ENCODE measurements at regions of chr15 and their contacts with region 1.

Region 1: GRCh38 chr15:59528965-59529402 is 82.6 kb upstream of the GCNT3 start:
- DNase-seq: peak; percentile 33
- H3K4me3 ChIP-seq: no peak overlapping the region
- CTCF ChIP-seq: peak; percentile 78

Region 2: GRCh38 chr15:58212909-58213526 is 1316.0 kb before region 1 on chr15:
- CTCF ChIA-PET with region 1: interaction called, 12 read pairs
- POLR2A ChIA-PET with region 1: no interaction called
- DNase-seq: no peak
- H3K4me3 ChIP-seq: no peak overlapping the region
- CTCF ChIP-seq: peak; percentile 52

Region 3: GRCh38 chr15:58957101-58957973 is 571.6 kb before region 1 on chr15:
- CTCF ChIA-PET with region 1: interaction called, 25 read pairs
- POLR2A ChIA-PET with region 1: no interaction called
- DNase-seq: no peak
- H3K4me3 ChIP-seq: no peak overlapping the region
- CTCF ChIP-seq: peak; percentile 74

Region 4: DNA sequence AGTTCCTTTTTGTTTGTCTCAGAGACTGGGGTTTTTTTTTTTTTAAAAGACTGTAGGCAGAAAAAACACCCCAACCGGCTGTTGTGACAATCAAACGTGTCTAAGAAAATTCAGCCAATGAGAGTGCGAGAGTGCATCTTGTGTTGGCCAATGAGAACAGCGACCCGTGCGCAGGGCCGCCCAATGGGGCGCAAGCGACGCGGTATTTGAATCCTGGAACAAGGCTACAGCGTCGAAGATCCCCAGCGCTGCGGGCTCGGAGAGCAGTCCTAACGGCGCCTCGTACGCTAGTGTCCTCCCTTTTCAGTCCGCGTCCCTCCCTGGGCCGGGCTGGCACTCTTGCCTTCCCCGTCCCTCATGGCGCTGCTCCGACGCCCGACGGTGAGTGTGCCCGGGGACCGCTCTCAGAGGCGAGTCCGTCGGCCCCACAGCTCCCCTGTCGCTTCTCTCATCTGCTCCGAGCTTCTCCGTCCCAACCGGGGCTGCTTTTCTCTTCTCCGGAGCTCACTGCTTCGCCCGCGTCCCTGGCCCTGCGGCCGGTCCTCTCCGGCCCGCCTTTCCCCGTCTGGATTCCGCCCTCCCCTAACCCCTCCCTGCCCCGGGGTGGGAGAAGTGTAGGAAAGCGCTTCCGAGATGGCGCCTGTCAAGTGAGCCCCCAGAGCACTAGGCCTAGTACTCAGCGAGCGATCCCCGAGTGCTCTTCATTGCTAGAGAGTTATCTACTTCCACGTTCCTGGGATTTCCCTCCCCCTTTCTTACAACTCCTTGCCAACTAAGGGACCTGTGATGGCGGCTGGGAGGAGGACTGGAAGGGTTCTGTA is 423.9 kb before region 1 on chr15 and contains the start of gene CCNB2:
- CTCF ChIA-PET with region 1: interaction called, 12 read pairs
- POLR2A ChIA-PET with region 1: no interaction called
- DNase-seq: peak; percentile 52
- H3K4me3 ChIP-seq: peak within 1 kb of the TSS; percentile 98
- CTCF ChIP-seq: no peak

Region 5: DNA sequence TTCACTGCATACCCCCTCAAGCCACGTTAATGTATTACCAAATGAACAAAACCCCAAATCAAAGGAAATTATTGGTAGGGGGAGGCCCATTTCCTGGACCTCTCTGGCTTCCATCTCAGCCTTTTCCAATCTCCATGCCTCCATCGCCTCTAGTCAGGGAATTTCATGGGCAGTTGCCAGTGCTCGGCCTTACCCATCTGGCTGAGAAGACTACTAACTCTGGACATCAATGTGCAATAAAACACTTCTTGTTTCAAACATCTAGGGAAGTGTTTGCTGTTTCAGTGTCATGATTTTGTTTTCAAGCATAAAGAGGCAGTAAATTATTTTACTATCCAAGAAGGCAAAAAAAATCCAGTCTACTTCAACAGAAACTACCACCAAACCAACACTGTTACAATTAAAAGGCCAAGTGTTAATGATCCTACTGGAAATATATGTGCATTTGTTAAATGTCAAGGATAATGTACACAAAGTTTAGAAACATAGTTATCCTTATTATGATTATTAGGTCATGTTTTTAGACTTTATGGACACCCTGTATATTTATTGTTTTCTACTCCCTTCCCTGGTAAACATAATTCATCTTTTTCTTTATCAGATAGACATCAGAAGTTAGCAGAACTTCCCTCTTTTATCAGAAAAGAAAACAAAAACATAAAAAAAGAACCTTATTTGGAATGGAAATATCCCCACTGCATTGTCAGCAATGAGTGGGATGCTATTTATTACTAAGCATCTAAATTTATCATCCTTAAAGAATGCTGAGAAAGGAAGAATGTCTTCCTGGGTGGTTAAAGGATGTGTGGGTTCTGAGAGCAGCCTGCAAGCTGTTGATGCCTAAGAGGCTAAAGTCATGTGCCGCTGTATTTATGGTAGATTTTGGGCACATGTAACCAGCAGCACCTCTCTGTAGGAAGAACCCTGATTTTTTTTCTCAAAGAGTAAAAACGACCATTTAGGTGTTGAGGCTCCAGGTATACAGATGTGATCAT is 307.2 kb before region 1 on chr15:
- CTCF ChIA-PET with region 1: no interaction called
- POLR2A ChIA-PET with region 1: no interaction called
- DNase-seq: peak; percentile 70
- H3K4me3 ChIP-seq: no peak overlapping the region
- CTCF ChIP-seq: no peak

Region 6: DNA sequence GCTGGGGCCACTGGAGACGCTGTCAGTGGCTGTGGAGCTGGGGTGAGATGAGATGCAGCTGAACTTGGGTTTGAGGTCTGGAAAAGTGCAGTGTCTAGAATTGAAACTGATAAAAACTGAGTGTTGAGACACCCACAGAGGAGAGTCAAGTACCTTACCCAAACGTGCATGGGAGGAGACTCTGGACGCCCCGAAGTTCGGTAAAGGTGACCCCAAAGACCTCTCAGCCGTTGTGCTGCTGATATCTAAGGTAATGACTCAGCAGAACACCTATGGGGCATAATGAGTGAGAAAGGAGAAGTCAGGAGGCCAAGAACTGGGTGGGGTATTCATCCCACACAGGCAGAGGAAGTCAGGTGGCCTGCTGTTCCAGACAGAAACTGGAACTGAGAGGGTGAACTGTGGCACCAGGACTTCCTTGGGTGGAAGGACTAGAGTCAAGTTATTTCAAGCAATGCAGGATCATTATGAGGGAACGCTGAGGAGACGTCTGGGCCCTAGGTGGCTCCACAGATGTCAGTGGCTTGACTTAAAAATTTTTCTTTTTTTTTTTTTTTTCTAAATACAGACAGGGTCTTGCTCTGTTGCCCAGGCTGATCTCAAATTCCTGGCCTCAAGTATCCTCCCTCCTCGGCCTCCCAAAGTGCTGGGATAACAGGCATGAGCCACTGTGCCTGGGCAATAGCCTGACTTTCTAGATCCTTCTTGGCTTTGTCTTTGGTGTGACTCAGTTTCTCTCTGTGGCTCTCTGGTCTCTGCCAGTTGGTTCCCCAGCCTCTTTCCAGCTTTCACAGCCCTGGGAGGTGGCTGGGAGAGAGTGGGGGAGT is 14.9 kb after region 1 on chr15:
- CTCF ChIA-PET with region 1: interaction called, 31 read pairs
- POLR2A ChIA-PET with region 1: no interaction called
- DNase-seq: no peak
- H3K4me3 ChIP-seq: no peak overlapping the region
- CTCF ChIP-seq: no peak

Region 7: DNA sequence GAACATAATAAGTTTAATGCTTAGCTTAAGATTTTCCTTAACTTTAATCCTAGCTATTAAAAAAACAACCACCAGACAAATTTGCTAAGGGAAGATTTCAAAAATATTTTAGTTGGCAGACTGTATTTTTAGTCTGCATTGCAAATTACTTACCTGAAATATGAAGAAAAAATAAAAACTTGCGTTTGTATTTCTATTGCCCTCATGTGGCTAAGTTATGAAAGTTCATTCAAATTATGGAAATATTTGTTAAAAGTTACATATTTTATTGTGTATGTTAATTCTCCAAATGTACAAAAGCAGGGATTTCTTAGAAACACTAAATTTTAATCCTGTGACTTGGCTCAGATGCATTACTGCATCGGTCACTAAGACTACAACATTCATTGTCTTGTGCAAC is 113.4 kb after region 1 on chr15:
- CTCF ChIA-PET with region 1: interaction called, 71 read pairs
- POLR2A ChIA-PET with region 1: no interaction called
- DNase-seq: no peak
- H3K4me3 ChIP-seq: no peak overlapping the region
- CTCF ChIP-seq: no peak

Measured in AG04449 (cell line).